ENCODE measurements at regions of chr18 and their contacts with region 1.

Region 1: GRCh38 chr18:5197032-5197434 is at the start of gene AKAIN1:
- DNase-seq: peak; percentile 25 to 72 (median 41)
- ATAC-seq: peak in 3 of 4 donors; percentile 82 to 97 (median 96)
- H3K4me3 ChIP-seq: no peak within 1 kb of the TSS
- H3K27ac ChIP-seq: no peak within 1 kb of the TSS
- H3K4me1 ChIP-seq: peaks cover 0 to 11% (median 0%) of the 10 kb centered on the region in 12 donors
- H3K27me3 ChIP-seq: peaks cover 7 to 76% (median 36%) of the 10 kb centered on the region in 9 donors
- CTCF ChIP-seq: no peak
- POLR2A ChIP-seq: no peak
- total RNA-seq, gene AKAIN1: not detected

Region 2: GRCh38 chr18:5052491-5052890 is 144.5 kb before region 1 on chr18:
- intact Hi-C with region 1: no loop called
- DNase-seq: no peak
- ATAC-seq: no peak
- H3K4me3 ChIP-seq: no peak overlapping the region
- H3K27ac ChIP-seq: no peak overlapping the region
- H3K4me1 ChIP-seq: no peaks in the 10 kb centered on the region
- H3K27me3 ChIP-seq: no peaks in the 10 kb centered on the region
- CTCF ChIP-seq: no peak
- POLR2A ChIP-seq: no peak

Region 3: GRCh38 chr18:5244941-5245340 is 47.9 kb after region 1 on chr18:
- intact Hi-C with region 1: loop called in 1 of 10 experiments (anchors 10 kb)
- DNase-seq: no peak
- ATAC-seq: no peak
- H3K4me3 ChIP-seq: no peak overlapping the region
- H3K27ac ChIP-seq: no peak overlapping the region
- H3K4me1 ChIP-seq: peaks cover 0 to 17% (median 5%) of the 10 kb centered on the region in 12 donors
- H3K27me3 ChIP-seq: no peaks in the 10 kb centered on the region
- CTCF ChIP-seq: no peak
- POLR2A ChIP-seq: no peak